ENCODE measurements at regions of chr4 and their contacts with region 1.

Region 1: GRCh38 chr4:147866532-147867271 is 134.8 kb downstream of the ARHGAP10 start:
- DNase-seq: peak; percentile 96
- ATAC-seq: peak; percentile 98
- H3K4me3 Mint-ChIP-seq: no peak overlapping the region
- H3K27ac Mint-ChIP-seq: no peak overlapping the region
- H3K4me1 Mint-ChIP-seq: peaks cover 3% of the 10 kb centered on the region
- H3K27me3 Mint-ChIP-seq: no peaks in the 10 kb centered on the region

Region 2: DNA sequence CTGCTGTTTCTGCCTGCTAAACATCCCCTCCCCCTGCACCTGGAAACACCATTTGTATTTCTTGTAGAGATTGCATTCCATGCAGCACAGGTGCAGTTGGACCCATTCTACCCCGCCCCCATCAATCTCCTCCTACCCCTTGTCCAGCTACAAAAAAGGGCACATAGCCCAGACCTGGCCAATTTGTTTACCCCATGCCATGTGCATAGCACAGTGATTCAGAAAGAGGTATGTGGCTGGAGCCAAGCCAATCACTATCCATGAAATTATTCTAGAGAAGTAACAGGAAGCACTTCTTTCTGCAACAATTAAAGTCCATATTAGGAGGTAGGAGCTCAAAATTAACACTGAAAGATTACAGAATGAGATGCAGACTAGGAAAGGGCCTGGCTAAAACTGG is 269.7 kb before region 1 on chr4:
- CTCF ChIA-PET with region 1: interaction called, 58 read pairs
- POLR2A ChIA-PET with region 1: no interaction called
- DNase-seq: no peak
- ATAC-seq: no peak
- H3K4me3 Mint-ChIP-seq: no peak overlapping the region
- H3K27ac Mint-ChIP-seq: no peak overlapping the region
- H3K4me1 Mint-ChIP-seq: peaks cover 5% of the 10 kb centered on the region
- H3K27me3 Mint-ChIP-seq: peaks cover 12% of the 10 kb centered on the region

Region 3: DNA sequence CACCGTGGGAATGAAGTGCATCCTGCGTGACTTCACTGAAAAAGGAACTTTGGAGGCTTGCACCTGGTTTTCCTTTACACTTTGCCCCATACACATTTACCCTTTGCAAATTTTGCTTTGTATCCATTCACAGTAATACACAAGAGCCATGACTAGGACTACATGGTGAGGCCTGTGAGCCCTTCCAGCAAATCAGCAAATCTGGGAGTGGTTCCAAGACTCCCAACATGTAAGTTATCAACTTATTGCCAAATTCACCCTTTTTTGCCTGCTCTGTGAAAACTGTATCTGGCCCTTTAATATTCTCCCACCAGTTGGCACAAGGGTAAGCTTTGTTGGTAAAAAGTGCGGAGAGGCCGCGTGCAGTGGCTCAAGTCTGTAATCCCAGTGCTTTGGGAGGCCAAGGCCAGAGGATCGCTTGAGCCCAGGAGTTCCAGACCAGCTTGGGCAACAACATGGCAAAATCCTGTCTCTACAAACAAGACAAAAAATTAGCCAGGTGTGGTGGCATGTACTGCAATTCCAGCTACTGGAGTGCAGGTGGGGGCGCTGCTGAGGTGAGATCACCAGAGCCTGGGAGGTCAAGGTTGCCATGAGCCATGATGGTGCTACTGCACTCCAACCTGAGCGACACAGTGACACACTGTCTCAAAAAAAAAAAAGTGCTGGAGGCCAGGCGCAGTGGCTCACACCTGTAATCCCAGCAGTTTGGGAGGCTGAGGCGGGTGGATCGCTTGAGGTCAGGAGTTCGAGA is 187.7 kb before region 1 on chr4:
- CTCF ChIA-PET with region 1: interaction called, 43 read pairs
- POLR2A ChIA-PET with region 1: no interaction called
- DNase-seq: peak; percentile 26
- ATAC-seq: no peak
- H3K4me3 Mint-ChIP-seq: no peak overlapping the region
- H3K27ac Mint-ChIP-seq: no peak overlapping the region
- H3K4me1 Mint-ChIP-seq: peaks cover 21% of the 10 kb centered on the region
- H3K27me3 Mint-ChIP-seq: no peaks in the 10 kb centered on the region

Region 4: DNA sequence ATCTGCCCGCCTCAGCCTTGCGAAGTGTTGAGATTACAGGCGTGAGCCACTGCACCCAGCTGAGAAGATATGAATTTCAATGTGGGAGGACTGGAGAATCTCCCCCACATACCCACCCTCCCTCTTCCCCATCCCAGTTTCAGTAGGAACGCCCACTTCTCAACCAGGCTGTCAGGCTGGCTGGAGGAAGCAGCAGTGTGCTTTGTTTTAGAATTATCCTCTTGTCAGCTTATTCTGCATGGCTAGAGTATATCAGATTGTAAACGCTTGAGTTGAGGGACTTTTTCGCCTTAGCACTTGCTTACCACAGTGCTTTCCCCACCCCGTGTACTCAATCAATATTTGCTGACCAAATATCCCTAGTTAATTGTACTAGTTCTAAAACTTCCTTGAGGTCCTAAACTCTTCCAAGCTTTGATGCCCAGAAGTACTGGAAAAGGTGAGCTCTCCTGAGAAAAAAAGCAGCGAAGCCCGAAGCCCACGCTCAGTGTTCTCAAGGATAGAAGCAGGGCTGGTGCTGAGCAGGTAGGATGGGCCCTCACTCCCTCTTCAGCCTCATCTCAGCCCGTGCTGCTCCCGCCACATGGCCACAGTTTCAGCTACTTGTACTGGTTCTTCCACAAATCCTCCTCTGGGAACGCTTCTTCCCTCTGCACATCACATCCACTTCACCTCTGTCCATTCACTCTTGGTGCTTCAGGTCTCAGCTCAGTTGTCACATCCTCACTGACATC is 142.1 kb before region 1 on chr4:
- CTCF ChIA-PET with region 1: interaction called, 35 read pairs
- POLR2A ChIA-PET with region 1: no interaction called
- DNase-seq: peak; percentile 14
- ATAC-seq: no peak
- H3K4me3 Mint-ChIP-seq: no peak overlapping the region
- H3K27ac Mint-ChIP-seq: no peak overlapping the region
- H3K4me1 Mint-ChIP-seq: no peaks in the 10 kb centered on the region
- H3K27me3 Mint-ChIP-seq: peaks cover 28% of the 10 kb centered on the region

Region 5: GRCh38 chr4:147793569-147794313 is 73.0 kb before region 1 on chr4:
- CTCF ChIA-PET with region 1: interaction called, 38 read pairs
- POLR2A ChIA-PET with region 1: no interaction called
- DNase-seq: peak; percentile 32
- ATAC-seq: peak; percentile 46
- H3K4me3 Mint-ChIP-seq: no peak overlapping the region
- H3K27ac Mint-ChIP-seq: peak overlapping the region; percentile 2
- H3K4me1 Mint-ChIP-seq: peaks cover 44% of the 10 kb centered on the region
- H3K27me3 Mint-ChIP-seq: peaks cover 5% of the 10 kb centered on the region

Region 6: DNA sequence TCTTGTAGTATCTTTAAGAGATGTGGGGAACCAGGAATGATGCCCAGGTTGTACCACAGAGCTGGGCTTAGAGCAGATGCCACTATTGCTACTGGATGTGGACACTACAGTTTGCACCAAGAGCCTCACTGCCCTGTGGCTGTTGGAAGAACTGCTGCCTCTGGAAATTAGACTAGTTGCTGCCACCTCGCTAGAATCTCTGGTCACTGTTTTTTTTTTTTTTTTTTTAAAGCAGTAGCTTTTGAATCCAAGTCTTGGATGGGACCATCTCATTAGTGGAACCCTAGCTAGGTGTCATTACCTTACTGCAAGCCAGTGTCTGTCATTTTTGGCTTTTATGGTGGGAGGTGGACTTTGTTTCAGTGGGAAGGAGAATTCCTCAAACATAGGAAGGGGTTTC is 29.3 kb before region 1 on chr4:
- CTCF ChIA-PET with region 1: interaction called, 22 read pairs
- POLR2A ChIA-PET with region 1: no interaction called
- DNase-seq: no peak
- ATAC-seq: no peak
- H3K4me3 Mint-ChIP-seq: no peak overlapping the region
- H3K27ac Mint-ChIP-seq: no peak overlapping the region
- H3K4me1 Mint-ChIP-seq: no peaks in the 10 kb centered on the region
- H3K27me3 Mint-ChIP-seq: peaks cover 6% of the 10 kb centered on the region

Region 7: DNA sequence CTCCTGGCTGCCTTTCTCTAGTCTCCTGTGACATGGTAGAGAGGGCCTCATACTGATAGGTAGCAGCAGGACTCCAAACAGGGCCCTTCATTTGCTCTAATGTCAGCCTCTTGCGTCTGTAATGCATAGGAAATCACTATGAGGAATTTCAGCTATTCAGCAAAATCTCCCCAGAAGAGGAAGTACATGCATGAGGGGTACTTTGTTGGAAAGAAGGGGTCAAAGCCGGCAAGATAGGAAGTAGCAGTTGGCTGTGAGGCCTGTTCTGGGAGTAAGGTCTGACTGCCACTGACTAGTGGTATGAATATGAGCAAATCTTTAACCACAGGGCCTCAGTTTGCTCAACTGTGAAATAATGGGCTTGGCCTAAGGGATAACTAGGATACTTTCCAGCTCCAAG is 148.4 kb after region 1 on chr4:
- CTCF ChIA-PET with region 1: no interaction called
- POLR2A ChIA-PET with region 1: no interaction called
- DNase-seq: no peak
- ATAC-seq: no peak
- H3K4me3 Mint-ChIP-seq: no peak overlapping the region
- H3K27ac Mint-ChIP-seq: no peak overlapping the region
- H3K4me1 Mint-ChIP-seq: no peaks in the 10 kb centered on the region
- H3K27me3 Mint-ChIP-seq: no peaks in the 10 kb centered on the region